Activated B cell treated with CpG ODN at 0.5 μM for 24 hours (primary cell): ENCODE measurements at regions of chr5 and their contacts with region 1.

Region 1: DNA sequence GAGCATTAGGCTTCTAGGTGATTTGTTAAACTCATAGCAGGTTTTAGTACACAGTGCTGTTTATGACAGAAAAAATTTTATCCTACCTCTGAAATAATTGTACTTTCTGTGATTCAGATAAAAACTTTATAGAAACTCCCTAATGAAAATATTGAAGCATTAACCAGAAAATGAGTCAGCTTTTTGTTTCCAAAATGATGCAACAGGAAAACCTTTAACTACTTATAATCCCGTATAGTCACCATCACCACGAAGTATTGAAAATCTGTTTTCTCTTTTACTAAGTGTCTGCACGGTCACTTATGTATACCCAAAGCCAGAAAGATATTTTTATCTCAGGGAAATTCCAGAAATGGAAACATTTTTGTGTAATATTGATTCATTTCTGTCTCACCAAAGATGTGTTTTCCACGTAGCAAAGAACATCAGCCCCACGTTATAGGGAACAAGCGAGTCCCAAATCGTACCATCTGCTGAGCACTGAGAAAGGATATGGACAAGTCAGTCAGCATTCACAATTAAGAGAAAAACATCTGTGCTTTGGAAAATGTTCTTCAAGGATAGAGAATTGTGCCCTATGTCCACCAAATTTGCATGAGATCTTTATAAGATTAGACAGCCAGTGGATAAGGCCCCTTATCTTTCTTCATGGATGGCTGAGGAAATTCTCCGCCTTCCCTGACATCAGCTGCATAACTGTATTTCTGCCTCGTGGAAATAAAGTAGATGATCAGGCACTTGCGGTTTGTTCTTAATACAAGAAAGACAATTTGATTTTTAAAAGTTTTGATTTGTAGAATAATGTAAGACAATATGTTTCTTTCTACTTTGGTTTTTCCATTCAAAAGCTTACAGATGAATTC is 41.9 kb downstream of the TNFAIP8 start:
- DNase-seq: no peak
- ATAC-seq: peak; percentile 45
- H3K4me3 Mint-ChIP-seq: peak overlapping the region; percentile 67
- H3K27ac Mint-ChIP-seq: peak overlapping the region; percentile 80
- H3K4me1 Mint-ChIP-seq: peaks cover 88% of the 10 kb centered on the region
- H3K27me3 Mint-ChIP-seq: no peaks in the 10 kb centered on the region
- CTCF ChIP-seq: no peak

Region 2: DNA sequence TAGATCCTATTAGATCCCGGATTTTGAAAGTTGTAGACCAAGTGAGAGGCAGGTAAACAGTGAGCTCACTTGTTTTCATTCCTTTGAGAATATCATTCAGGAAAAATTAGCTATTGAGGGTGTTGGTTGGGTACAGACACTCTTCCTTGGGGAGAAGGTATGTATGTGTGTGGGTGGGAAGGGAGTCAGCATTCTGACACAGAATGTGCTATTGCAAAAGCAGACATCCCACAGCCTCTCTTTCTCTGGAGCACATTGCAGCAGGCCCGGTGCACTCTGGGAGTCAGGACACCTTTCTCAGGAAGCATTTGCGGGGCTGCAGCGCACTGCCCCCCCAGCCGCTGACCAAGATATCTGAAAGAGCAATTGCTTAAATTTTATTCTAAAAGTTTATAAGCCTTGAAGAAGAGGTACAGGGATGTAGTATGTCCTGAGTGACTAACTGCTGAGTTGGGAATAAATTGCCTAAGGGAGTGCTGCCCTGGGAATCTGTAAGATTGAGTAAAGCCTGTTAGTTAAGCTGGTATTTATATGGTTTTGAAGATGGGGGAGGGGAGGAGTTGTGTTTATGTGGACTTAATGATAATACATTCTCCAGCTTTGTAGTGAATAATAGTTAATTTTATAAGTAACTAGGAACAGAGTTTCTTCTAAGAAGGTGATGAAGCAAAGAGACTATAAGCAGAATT is 36.7 kb before region 1 on chr5:
- CTCF ChIA-PET with region 1: interaction called, 3 read pairs
- POLR2A ChIA-PET with region 1: interaction called, 11 read pairs
- intact Hi-C with region 1: no loop called
- DNase-seq: no peak
- ATAC-seq: no peak
- H3K4me3 Mint-ChIP-seq: peak overlapping the region; percentile 100
- H3K27ac Mint-ChIP-seq: peak overlapping the region; percentile 75
- H3K4me1 Mint-ChIP-seq: peaks cover 85% of the 10 kb centered on the region
- H3K27me3 Mint-ChIP-seq: no peaks in the 10 kb centered on the region
- CTCF ChIP-seq: no peak

Region 3: DNA sequence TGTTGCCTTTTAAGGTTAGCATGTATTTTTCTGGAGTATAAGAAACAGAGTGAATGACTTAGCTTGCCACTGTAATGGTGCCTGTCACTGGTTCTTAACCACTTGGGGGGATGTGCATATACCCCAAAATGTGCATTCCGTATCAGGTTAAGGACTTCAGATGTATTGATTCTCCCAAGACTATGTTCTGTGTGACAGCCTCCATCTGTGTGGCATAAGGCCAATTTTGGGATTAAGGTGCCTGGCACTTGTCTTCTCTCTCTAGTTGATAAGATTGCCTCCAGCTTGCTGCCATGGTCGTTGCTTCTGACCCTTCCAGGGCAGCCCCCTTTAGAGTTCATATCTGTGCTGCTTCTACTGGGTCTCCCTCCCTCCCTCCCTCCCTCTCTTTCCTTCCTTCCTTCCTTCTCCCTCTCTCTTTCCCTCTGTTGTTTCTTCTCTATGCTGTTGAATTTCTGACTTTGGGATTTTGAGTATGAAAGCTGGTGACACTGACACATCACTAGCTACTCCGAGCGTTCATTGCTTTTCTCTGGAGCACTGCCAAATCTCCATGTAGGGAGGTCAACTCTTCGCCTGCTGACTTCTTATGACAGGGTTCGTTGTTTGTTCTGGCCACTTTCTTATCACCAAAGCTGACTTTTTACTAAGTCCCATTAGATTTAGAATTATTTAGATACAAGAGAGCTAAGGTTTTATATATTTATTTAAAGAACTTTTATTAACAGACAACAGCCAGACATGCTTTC is 11.0 kb before region 1 on chr5:
- CTCF ChIA-PET with region 1: no interaction called
- POLR2A ChIA-PET with region 1: interaction called, 5 read pairs
- intact Hi-C with region 1: loop called (anchors 1 kb)
- DNase-seq: no peak
- ATAC-seq: no peak
- H3K4me3 Mint-ChIP-seq: no peak overlapping the region
- H3K27ac Mint-ChIP-seq: peak overlapping the region; percentile 50
- H3K4me1 Mint-ChIP-seq: peaks cover 96% of the 10 kb centered on the region
- H3K27me3 Mint-ChIP-seq: no peaks in the 10 kb centered on the region
- CTCF ChIP-seq: no peak